AG04450 (cell line): ENCODE measurements at regions of chr1 and their contacts with region 1.

Region 1: DNA sequence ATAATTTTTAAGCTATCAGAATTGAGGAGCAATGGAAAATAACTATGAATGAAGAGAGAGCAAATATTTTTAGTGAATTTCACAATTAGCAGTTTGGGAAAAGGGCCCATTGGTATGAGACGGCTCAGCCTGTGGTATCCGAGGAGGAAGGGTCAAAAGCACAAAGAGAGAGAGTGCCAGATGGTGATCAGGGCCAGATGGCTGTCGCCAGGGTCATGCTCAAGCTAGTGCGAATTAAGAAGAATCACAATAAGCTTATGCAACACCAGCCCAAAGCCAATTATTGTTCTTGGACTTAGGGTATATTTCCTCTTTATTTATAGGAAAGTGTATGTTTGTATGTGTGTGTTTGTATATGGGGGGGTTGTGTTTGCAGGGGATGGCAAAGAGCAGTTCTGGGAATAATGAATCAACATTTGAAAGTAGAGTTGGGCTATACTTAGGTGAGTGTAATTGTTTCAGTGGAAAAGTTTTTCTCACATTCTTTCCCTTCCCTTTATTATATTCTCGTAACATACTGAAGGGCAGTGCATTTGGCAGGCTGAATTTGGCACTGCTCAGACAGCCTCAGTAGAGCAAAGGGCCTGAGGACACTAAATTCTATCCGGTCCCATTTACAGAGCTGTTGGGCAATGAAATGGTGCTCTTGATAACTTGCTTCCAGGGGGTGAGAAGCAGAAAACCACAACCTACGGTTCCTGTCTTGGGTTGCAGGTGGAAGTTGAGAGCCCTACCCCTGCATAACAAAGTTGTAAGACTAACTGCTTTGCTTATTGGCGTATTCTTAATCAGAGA is 19.5 kb upstream of the DDR2 start:
- DNase-seq: no peak
- H3K4me3 ChIP-seq: no peak overlapping the region
- H3K27ac ChIP-seq: no peak overlapping the region
- H3K27me3 ChIP-seq: no peaks in the 10 kb centered on the region
- CTCF ChIP-seq: no peak

Region 2: DNA sequence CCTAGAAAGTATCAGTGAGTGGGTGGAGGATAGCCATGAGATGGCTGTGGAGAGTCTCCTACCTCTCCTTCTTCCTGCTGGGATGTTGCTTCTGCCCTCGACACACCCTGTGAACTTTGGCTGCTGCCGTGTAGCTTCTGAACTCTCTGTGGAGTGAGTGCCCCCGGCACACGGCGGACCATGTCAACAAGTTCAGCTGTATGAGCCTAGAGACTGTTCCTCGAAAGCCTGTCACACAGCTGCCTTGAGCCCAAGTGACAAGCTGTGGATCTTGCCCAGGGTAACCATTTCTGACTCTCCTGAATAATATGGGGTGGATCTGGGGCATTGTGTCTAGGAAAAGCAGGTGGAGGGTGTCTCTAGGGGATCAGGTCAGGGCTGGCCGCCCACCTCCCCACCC is 400.1 kb before region 1 on chr1:
- CTCF ChIA-PET with region 1: no interaction called
- POLR2A ChIA-PET with region 1: interaction called, 12 read pairs
- DNase-seq: no peak
- H3K4me3 ChIP-seq: no peak overlapping the region
- H3K27ac ChIP-seq: no peak overlapping the region
- H3K27me3 ChIP-seq: peaks cover 8% of the 10 kb centered on the region
- CTCF ChIP-seq: no peak

Region 3: GRCh38 chr1:162627662-162628296 is 15.0 kb after region 1 on chr1:
- CTCF ChIA-PET with region 1: interaction called, 70 read pairs
- POLR2A ChIA-PET with region 1: interaction called, 7 read pairs
- DNase-seq: no peak
- H3K4me3 ChIP-seq: no peak overlapping the region
- H3K27ac ChIP-seq: no peak overlapping the region
- H3K27me3 ChIP-seq: no peaks in the 10 kb centered on the region
- CTCF ChIP-seq: peak; percentile 58

Region 4: GRCh38 chr1:162649583-162649982 is 36.8 kb after region 1 on chr1:
- CTCF ChIA-PET with region 1: interaction called, 13 read pairs
- POLR2A ChIA-PET with region 1: no interaction called
- DNase-seq: no peak
- H3K4me3 ChIP-seq: no peak overlapping the region
- H3K27ac ChIP-seq: no peak overlapping the region
- H3K27me3 ChIP-seq: no peaks in the 10 kb centered on the region
- CTCF ChIP-seq: no peak

Region 5: GRCh38 chr1:162756523-162756922 is 143.7 kb after region 1 on chr1:
- CTCF ChIA-PET with region 1: interaction called, 12 read pairs
- POLR2A ChIA-PET with region 1: no interaction called
- DNase-seq: no peak
- H3K4me3 ChIP-seq: no peak overlapping the region
- H3K27ac ChIP-seq: no peak overlapping the region
- H3K27me3 ChIP-seq: no peaks in the 10 kb centered on the region
- CTCF ChIP-seq: no peak